ENCODE measurements at regions of chr14 and their contacts with region 1.

Region 1: GRCh38 chr14:64891839-64892375 is 12.2 kb upstream of the SPTB start:
- DNase-seq: peak; percentile 56 to 80
- ATAC-seq: peak; percentile 95 to 99
- H3K4me3 ChIP-seq: no peak overlapping the region
- H3K27ac ChIP-seq: no peak overlapping the region
- H3K4me1 ChIP-seq: no peaks in the 10 kb centered on the region
- CTCF ChIP-seq: peak; percentile 79
- EP300 ChIP-seq: no peak
- POLR2A ChIP-seq: no peak
- RAD21 ChIP-seq: peak; percentile 89 to 90

Region 2: GRCh38 chr14:64338616-64339316 is 553.1 kb before region 1 on chr14:
- CTCF ChIA-PET with region 1: interaction called, 18 read pairs
- POLR2A ChIA-PET with region 1: interaction called, 4 read pairs
- DNase-seq: peak; percentile 99
- ATAC-seq: peak; percentile 94
- H3K4me3 ChIP-seq: peak overlapping the region; percentile 83
- H3K27ac ChIP-seq: peak overlapping the region; percentile 94 to 95
- H3K4me1 ChIP-seq: peaks cover 17% of the 10 kb centered on the region
- CTCF ChIP-seq: no peak
- EP300 ChIP-seq: no peak
- POLR2A ChIP-seq: peak; percentile 96
- RAD21 ChIP-seq: no peak

Region 3: GRCh38 chr14:64698903-64699302 is 193.0 kb before region 1 on chr14:
- CTCF ChIA-PET with region 1: interaction called, 16 read pairs
- POLR2A ChIA-PET with region 1: no interaction called
- DNase-seq: peak in 1 of 2 experiments; percentile 38
- ATAC-seq: peak; percentile 14 to 50; a peak in 3 of 6 replicates
- H3K4me3 ChIP-seq: no peak overlapping the region
- H3K27ac ChIP-seq: peak overlapping the region in 1 of 2 experiments; percentile 66; a peak in 3 of 6 replicates
- H3K4me1 ChIP-seq: peaks cover 27% of the 10 kb centered on the region
- CTCF ChIP-seq: no peak
- EP300 ChIP-seq: no peak
- POLR2A ChIP-seq: no peak
- RAD21 ChIP-seq: no peak

Region 4: GRCh38 chr14:64782196-64782595 is 109.7 kb before region 1 on chr14:
- CTCF ChIA-PET with region 1: interaction called, 102 read pairs
- POLR2A ChIA-PET with region 1: no interaction called
- DNase-seq: no peak
- ATAC-seq: no peak
- H3K4me3 ChIP-seq: no peak overlapping the region
- H3K27ac ChIP-seq: no peak overlapping the region
- H3K4me1 ChIP-seq: no peaks in the 10 kb centered on the region
- CTCF ChIP-seq: no peak
- EP300 ChIP-seq: no peak
- POLR2A ChIP-seq: no peak
- RAD21 ChIP-seq: no peak

Region 5: DNA sequence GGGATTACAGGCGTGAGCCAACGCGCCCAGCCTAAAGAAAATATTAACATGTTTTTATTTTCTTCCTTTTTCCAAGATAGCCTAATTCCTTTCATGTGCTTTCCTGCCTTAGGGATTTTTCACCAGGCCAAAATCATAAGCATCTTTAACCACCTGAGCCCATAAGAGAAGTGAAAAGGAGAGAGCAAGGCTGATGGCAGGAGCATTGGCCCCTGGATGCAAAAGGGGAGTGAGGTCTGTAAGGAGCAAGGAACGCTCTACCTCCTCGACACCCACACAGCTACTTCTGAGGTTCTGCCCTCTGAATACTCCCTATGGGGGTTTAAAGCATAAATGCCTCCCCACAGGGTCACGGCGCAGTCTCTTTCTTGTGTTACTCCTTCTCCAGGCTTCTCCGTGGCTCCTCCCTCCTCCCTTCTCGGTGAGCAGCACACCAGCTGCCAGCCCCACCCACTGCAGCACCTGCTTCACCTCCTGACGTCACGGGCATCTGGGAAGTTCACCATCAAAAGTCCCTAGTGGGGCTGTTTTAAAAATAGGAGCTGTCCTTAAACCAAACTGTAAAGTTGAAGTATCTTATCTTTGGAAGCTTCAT is 79.6 kb before region 1 on chr14:
- CTCF ChIA-PET with region 1: interaction called, 250 read pairs
- POLR2A ChIA-PET with region 1: no interaction called
- DNase-seq: no peak
- ATAC-seq: peak in 1 of 2 experiments; percentile 35; a peak in 1 of 6 replicates
- H3K4me3 ChIP-seq: no peak overlapping the region
- H3K27ac ChIP-seq: peak overlapping the region in 1 of 2 experiments; percentile 44; a peak in 3 of 6 replicates
- H3K4me1 ChIP-seq: peaks cover 21% of the 10 kb centered on the region
- CTCF ChIP-seq: no peak
- EP300 ChIP-seq: no peak
- POLR2A ChIP-seq: no peak
- RAD21 ChIP-seq: no peak

Region 6: DNA sequence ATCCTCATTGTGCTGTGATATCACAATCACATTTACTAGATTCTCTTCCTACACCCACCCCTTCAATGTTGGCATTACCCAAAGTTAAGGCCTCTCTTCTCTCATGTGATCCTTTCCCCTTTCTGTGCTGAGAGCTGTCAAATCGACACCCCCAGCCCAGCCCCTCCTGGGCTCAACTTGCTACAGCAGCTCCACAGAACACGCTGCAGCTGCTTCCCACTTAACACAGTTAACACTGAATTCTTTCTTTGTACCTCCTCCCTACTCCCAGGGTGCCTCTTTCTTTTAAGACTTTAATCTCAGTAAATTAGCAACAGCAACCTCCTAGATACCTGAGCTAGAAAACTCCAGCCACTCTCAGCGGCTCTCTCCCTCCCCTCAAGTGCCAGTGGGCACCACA is 30.0 kb before region 1 on chr14:
- CTCF ChIA-PET with region 1: interaction called, 11 read pairs
- POLR2A ChIA-PET with region 1: no interaction called
- DNase-seq: no peak
- ATAC-seq: no peak
- H3K4me3 ChIP-seq: no peak overlapping the region
- H3K27ac ChIP-seq: no peak overlapping the region
- H3K4me1 ChIP-seq: no peaks in the 10 kb centered on the region
- CTCF ChIP-seq: no peak
- EP300 ChIP-seq: no peak
- POLR2A ChIP-seq: no peak
- RAD21 ChIP-seq: no peak

Region 7: DNA sequence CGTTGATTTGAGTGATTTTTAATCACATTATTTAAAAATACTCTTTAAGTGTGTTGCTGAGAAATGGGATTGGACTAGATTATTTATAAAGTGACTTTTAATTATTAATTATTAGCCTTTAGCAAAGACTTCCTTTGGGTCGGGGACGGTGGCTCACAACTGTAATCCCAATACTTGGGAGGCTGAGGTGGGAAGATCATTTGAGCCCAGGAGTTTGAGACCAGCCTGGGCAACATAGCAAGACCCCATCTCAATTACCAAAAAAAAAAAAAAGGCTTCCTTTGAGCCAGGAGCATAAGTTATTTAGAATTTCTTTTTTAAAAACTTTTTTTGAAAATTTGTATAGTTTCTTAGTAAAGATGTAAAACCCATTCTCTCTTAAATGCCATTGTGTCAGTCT is 31.1 kb after region 1 on chr14:
- CTCF ChIA-PET with region 1: interaction called, 14 read pairs
- POLR2A ChIA-PET with region 1: no interaction called
- DNase-seq: no peak
- ATAC-seq: no peak
- H3K4me3 ChIP-seq: no peak overlapping the region
- H3K27ac ChIP-seq: no peak overlapping the region
- H3K4me1 ChIP-seq: peaks cover 19% of the 10 kb centered on the region
- CTCF ChIP-seq: no peak
- EP300 ChIP-seq: no peak
- POLR2A ChIP-seq: no peak
- RAD21 ChIP-seq: no peak

Region 8: DNA sequence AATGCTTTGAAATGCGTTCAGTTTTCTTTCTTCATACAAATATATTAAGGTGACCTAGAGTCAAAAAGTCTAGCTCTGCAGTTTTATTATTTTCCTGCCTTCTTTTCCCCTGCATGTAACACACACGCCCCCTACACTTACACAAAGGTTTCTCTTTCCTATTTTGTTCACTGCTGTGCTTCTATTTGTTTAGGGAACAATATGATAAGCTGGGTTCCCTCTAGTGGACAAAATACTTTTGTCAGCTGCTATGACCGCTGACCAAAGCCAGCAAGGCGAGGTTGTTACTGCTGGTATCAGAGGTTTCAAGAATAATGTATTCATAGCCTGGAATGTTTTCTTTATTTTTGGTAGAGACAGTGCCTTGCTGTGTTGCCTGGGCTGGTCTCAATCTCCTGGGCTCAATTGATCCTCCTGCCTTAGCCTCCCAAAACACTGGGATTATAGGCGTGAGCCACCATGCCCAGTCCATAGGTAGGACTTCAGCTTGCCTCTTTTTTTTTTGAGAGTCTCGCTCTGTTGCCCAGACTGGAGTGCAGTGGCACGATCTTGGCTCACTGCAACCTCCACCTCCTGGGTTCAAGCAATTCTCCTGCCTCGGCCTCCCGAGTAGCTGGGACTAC is 128.1 kb after region 1 on chr14:
- CTCF ChIA-PET with region 1: no interaction called
- POLR2A ChIA-PET with region 1: no interaction called
- DNase-seq: peak; percentile 51 to 80
- ATAC-seq: peak; percentile 99
- H3K4me3 ChIP-seq: no peak overlapping the region
- H3K27ac ChIP-seq: no peak overlapping the region
- H3K4me1 ChIP-seq: no peaks in the 10 kb centered on the region
- CTCF ChIP-seq: peak; percentile 64
- EP300 ChIP-seq: no peak
- POLR2A ChIP-seq: no peak
- RAD21 ChIP-seq: peak; percentile 52 to 54; a peak in 4 of 5 replicates